ENCODE measurements at regions of chr11 and their contacts with region 1.

Region 1: GRCh38 chr11:46537537-46538295 is 56.1 kb downstream of the AMBRA1 start:
- DNase-seq: peak in 8 of 9 donors; percentile 33 to 75 (median 66)
- ATAC-seq: peak; percentile 88
- H3K4me3 ChIP-seq: no peak overlapping the region
- H3K4me3 Mint-ChIP-seq: no peak overlapping the region
- H3K27ac ChIP-seq: no peak overlapping the region
- H3K27ac Mint-ChIP-seq: peak overlapping the region in 4 of 9 donors; percentile 2 to 38 (median 16)
- H3K4me1 ChIP-seq: peaks cover 0 to 3% of the 10 kb centered on the region in 2 donors
- H3K4me1 Mint-ChIP-seq: peaks cover 14 to 58% (median 39%) of the 10 kb centered on the region in 7 donors
- H3K27me3 ChIP-seq: no peaks in the 10 kb centered on the region
- H3K27me3 Mint-ChIP-seq: no peaks in the 10 kb centered on the region

Region 2: GRCh38 chr11:45964911-45965389 is 572.8 kb before region 1 on chr11:
- CTCF ChIA-PET with region 1: no interaction called
- POLR2A ChIA-PET with region 1: no interaction called
- intact Hi-C with region 1: loop called in 1 of 2 experiments (anchors 1 kb)
- DNase-seq: peak; percentile 11 to 68 (median 61)
- ATAC-seq: peak; percentile 96
- H3K4me3 ChIP-seq: no peak overlapping the region
- H3K4me3 Mint-ChIP-seq: no peak overlapping the region
- H3K27ac ChIP-seq: no peak overlapping the region
- H3K27ac Mint-ChIP-seq: no peak overlapping the region
- H3K4me1 ChIP-seq: no peaks in the 10 kb centered on the region
- H3K4me1 Mint-ChIP-seq: no peaks in the 10 kb centered on the region
- H3K27me3 ChIP-seq: no peaks in the 10 kb centered on the region
- H3K27me3 Mint-ChIP-seq: no peaks in the 10 kb centered on the region

Region 3: DNA sequence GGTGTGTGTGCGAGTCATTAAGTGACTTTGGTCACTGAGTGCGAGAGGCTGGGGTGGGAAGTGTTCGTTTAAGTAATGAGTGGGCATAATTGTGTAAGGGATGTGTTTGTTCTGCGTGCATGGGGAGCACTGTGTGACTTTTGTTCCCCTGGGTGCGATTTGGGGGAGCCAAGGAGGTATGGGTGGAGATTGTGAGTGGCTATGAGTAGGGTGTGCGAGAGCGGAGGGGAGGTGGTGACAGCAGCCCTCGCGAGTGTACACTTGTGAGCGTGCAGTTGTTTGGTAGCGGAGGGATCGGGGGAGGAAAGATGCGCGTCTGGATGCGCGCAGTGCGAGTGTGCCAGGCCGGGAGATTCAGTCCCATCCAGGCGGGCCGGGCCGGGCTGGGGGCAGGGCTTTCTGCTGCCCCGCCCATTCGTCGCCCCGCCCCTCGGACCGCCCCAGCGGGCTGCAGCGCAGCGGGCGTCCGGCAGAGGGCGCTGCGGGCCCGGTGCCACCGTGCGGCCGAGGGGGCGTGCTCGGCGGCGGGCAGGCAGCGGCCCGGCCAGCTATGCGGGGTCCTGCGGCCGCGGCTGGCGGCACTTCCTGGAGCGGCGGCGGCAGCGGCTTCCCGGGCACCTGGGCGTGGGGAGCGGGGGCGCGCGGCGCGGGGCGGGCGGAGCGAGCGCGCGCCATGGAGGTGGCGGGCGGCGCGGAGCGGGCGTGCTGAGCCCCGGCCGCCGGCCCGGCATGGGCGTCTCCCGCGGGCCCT is 190.7 kb before region 1 on chr11 and contains the start of gene DGKZ:
- CTCF ChIA-PET with region 1: no interaction called
- POLR2A ChIA-PET with region 1: no interaction called
- intact Hi-C with region 1: loop called (anchors 2 to 5 kb)
- DNase-seq: peak; percentile 85 to 100 (median 96)
- ATAC-seq: peak; percentile 92
- H3K4me3 ChIP-seq: peak within 1 kb of the TSS; percentile 91
- H3K4me3 Mint-ChIP-seq: peak within 1 kb of the TSS; percentile 93 to 97 (median 95)
- H3K27ac ChIP-seq: peak within 1 kb of the TSS; percentile 83
- H3K27ac Mint-ChIP-seq: peak within 1 kb of the TSS; percentile 89 to 98 (median 94)
- H3K4me1 ChIP-seq: peaks cover 46 to 79% of the 10 kb centered on the region in 2 donors
- H3K4me1 Mint-ChIP-seq: peaks cover 61 to 85% (median 75%) of the 10 kb centered on the region in 7 donors
- H3K27me3 ChIP-seq: no peaks in the 10 kb centered on the region
- H3K27me3 Mint-ChIP-seq: peaks cover 0 to 3% (median 0%) of the 10 kb centered on the region in 5 donors
- total RNA-seq, gene DGKZ: 146 to 291 (median 263) TPM

Region 4: GRCh38 chr11:46367244-46367915 is 170.3 kb before region 1 on chr11:
- CTCF ChIA-PET with region 1: no interaction called
- POLR2A ChIA-PET with region 1: no interaction called
- intact Hi-C with region 1: loop called (anchors 5 kb)
- DNase-seq: peak; percentile 65 to 84 (median 77)
- ATAC-seq: peak; percentile 86
- H3K4me3 ChIP-seq: no peak overlapping the region
- H3K4me3 Mint-ChIP-seq: peak overlapping the region in 5 of 10 donors; percentile 21 to 50 (median 45)
- H3K27ac ChIP-seq: peak overlapping the region; percentile 30
- H3K27ac Mint-ChIP-seq: peak overlapping the region in 5 of 9 donors; percentile 17 to 83 (median 63)
- H3K4me1 ChIP-seq: peaks cover 6 to 25% of the 10 kb centered on the region in 2 donors
- H3K4me1 Mint-ChIP-seq: peaks cover 20 to 52% (median 38%) of the 10 kb centered on the region in 7 donors
- H3K27me3 ChIP-seq: no peaks in the 10 kb centered on the region
- H3K27me3 Mint-ChIP-seq: no peaks in the 10 kb centered on the region

Region 5: GRCh38 chr11:46489661-46490560 is 47.8 kb before region 1 on chr11:
- CTCF ChIA-PET with region 1: interaction called, 6 read pairs
- POLR2A ChIA-PET with region 1: no interaction called
- intact Hi-C with region 1: loop called (anchors 1 kb)
- DNase-seq: peak in 7 of 9 donors; percentile 10 to 48 (median 27)
- ATAC-seq: peak; percentile 73
- H3K4me3 ChIP-seq: no peak overlapping the region
- H3K4me3 Mint-ChIP-seq: no peak overlapping the region
- H3K27ac ChIP-seq: no peak overlapping the region
- H3K27ac Mint-ChIP-seq: peak overlapping the region in 2 of 9 donors; percentile 32 to 66
- H3K4me1 ChIP-seq: no peaks in the 10 kb centered on the region
- H3K4me1 Mint-ChIP-seq: peaks cover 0 to 21% (median 8%) of the 10 kb centered on the region in 7 donors
- H3K27me3 ChIP-seq: no peaks in the 10 kb centered on the region
- H3K27me3 Mint-ChIP-seq: no peaks in the 10 kb centered on the region

Region 6: DNA sequence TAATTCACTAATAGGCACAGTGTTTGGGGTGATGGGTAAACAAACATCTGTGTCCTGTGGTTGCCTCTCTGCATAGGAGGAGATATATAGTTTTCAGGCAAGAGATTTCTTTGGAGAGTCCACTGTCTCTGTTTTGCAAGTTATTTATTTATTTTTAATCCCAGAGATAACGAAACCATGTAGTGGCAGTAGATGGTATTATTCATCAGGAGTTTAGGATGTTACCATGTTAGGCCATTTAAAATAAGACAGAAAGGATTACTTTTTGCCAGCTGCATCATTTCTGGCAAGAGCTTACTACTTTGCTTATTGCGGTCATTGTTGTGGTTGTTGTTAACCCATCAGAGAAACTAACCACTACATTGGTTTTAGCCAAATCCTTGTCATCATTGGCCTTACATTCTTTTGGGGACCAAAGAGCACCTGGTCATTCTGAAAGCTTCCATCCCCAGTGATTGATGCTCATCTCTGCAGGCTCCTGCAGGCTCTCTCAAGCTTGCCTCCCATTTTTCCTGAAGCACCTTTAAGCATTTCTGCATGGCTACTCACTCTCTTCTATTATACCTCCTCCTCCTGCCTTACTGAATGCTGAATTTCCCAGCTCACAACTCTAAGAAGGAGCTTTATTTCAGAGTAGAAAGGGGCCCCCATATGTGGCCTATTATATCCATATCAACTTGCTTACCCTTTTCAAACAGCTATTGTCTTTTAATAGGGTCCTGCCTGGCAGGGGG is 483.2 kb after region 1 on chr11:
- CTCF ChIA-PET with region 1: no interaction called
- POLR2A ChIA-PET with region 1: no interaction called
- intact Hi-C with region 1: no loop called
- DNase-seq: no peak
- ATAC-seq: no peak
- H3K4me3 ChIP-seq: no peak overlapping the region
- H3K4me3 Mint-ChIP-seq: no peak overlapping the region
- H3K27ac ChIP-seq: no peak overlapping the region
- H3K27ac Mint-ChIP-seq: no peak overlapping the region
- H3K4me1 ChIP-seq: no peaks in the 10 kb centered on the region
- H3K4me1 Mint-ChIP-seq: peaks cover 0 to 2% (median 0%) of the 10 kb centered on the region in 7 donors
- H3K27me3 ChIP-seq: no peaks in the 10 kb centered on the region
- H3K27me3 Mint-ChIP-seq: no peaks in the 10 kb centered on the region

Measured in naive thymus-derived CD4-positive, alpha-beta T cell (primary cell).